ENCODE measurements at regions of chr2 and their contacts with region 1.

Region 1: DNA sequence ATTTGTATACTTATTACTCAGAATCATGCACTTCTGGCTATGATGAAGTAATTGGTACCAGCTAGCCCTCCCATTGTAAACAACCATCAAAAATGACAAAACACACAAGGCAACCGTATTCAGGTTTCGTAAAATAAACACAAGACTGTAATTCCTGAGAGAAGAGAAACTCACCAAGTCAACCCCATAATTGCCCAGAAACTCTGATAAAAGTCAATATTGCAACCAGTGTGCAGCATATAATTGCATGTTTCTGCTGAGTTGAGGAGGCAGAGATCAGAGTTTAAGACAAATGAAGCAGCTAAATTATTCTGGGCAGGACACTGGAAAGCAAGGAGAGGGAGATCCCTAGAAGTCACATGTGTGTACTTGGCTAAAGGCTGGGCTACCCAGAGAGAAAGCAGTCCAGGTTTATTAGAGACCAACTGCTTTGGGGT is 90.3 kb downstream of the ROCK2 start:
- DNase-seq: no peak
- H3K4me3 ChIP-seq: no peak overlapping the region
- H3K27ac ChIP-seq: no peak overlapping the region
- H3K4me1 ChIP-seq: peaks cover 9 to 31% (median 18%) of the 10 kb centered on the region in 4 donors
- H3K27me3 ChIP-seq: no peaks in the 10 kb centered on the region
- CTCF ChIP-seq: no peak
- EP300 ChIP-seq: no peak
- POLR2A ChIP-seq: no peak

Region 2: DNA sequence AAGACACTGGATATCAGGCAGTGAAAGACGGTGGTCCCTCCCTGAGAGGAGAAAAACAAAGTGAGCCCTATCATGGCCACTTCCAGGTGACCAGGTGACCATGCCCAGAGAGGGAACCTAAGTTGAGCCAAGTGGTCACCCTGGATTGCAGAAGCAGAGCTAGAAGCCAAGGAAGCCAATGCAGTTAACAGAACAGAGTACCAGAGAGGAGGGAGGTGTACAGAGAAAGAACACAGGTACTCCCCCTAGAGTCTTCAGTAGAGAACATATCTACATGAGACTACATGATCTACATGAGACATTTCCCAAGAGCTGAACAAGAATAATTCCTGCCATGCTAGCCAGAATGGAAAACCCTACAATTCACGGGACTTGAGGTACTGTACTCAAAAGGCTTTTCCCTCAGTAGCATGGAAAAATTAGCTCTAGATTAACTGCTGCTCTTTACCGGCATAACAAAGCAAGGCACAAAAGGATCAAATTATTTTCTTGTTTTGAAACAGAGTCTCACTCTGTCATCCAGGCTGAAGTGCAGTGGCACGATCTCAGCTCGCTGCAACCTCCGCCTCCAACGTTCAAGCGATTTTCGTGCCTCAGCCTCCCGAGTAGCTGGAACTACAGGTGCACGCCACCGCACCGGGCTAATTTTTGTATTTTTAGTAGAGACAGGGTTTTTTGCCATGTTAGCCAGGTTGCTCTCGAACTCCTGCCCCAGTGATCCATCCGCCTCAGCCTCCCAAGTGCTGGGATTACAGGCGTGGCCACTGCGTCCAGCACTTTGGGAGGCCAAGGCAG is 66.8 kb after region 1 on chr2:
- intact Hi-C with region 1: loop called (anchors 10 kb)
- DNase-seq: no peak
- H3K4me3 ChIP-seq: no peak overlapping the region
- H3K27ac ChIP-seq: no peak overlapping the region
- H3K4me1 ChIP-seq: peaks cover 11 to 58% (median 46%) of the 10 kb centered on the region in 4 donors
- H3K27me3 ChIP-seq: no peaks in the 10 kb centered on the region
- CTCF ChIP-seq: no peak
- EP300 ChIP-seq: no peak
- POLR2A ChIP-seq: no peak

Region 3: DNA sequence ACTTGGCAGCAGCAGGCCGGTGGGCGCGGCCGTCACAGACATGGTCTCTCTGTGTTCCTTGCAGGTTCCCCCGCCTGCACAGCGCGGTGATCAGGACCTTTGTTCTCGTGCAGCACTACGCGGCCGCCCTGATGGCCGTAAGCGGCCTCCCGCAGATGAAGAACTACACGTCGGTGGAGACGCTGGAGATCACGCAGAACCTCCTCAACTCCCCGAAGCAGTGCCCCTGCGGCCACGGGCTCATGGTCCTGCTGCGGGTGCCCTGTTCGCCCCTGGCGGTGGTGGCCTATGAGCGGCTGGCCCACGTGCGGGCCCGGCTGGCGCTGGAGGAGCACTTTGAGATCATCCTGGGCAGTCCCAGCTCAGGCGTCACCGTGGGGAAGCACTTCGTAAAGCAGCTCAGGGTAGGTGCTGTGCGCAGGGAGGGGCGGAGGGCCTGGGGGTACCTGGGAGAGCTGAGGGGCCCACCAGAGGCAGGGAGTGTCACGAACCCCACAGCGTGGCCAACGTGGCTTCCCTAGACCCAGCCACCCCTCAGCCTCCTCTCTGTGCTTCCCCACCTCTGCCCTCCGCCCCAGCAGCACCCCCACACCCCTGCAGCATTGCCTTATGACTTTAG is 356.6 kb after region 1 on chr2:
- intact Hi-C with region 1: no loop called
- DNase-seq: no peak
- H3K4me3 ChIP-seq: no peak overlapping the region
- H3K27ac ChIP-seq: no peak overlapping the region
- H3K4me1 ChIP-seq: no peaks in the 10 kb centered on the region
- H3K27me3 ChIP-seq: no peaks in the 10 kb centered on the region
- CTCF ChIP-seq: no peak
- EP300 ChIP-seq: no peak
- POLR2A ChIP-seq: no peak

Region 4: DNA sequence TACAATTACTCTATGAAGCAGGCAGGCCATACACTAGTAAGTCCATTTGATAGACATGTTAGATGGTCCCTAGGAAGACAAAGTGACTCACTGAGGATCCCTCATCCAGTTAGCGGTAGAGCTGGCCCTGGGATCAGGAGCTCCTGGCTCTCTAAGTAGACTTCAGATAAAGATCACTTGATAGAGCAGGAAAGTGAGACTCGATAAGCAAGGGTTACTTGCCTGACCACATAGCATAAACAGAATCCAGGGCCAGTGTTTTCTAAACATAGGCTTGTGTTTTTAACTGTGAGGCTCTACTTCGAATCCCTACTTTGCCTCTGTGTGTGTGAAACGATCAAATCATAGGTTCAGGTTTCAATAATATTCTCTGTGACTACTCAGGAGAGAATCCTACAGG is 1107.4 kb after region 1 on chr2:
- intact Hi-C with region 1: no loop called
- DNase-seq: no peak
- H3K4me3 ChIP-seq: no peak overlapping the region
- H3K27ac ChIP-seq: no peak overlapping the region
- H3K4me1 ChIP-seq: no peaks in the 10 kb centered on the region
- H3K27me3 ChIP-seq: no peaks in the 10 kb centered on the region
- CTCF ChIP-seq: no peak
- EP300 ChIP-seq: no peak
- POLR2A ChIP-seq: no peak